ENCODE measurements at regions of chr12 and their contacts with region 1.

Region 1: GRCh38 chr12:53791735-53792326 is 40.1 kb upstream of the CISTR start:
- DNase-seq: no peak
- ATAC-seq: no peak
- H3K4me3 ChIP-seq: no peak overlapping the region
- H3K27ac ChIP-seq: no peak overlapping the region
- H3K4me1 ChIP-seq: no peaks in the 10 kb centered on the region
- H3K27me3 ChIP-seq: peaks cover 0 to 7% (median 4%) of the 10 kb centered on the region in 3 donors
- CTCF ChIP-seq: peak; percentile 14 to 45 (median 29)
- POLR2A ChIP-seq: no peak

Region 2: GRCh38 chr12:53820516-53821306 is 28.9 kb after region 1 on chr12:
- in situ Hi-C with region 1: no loop called
- intact Hi-C with region 1: no loop called
- DNase-seq: no peak
- ATAC-seq: peak in 1 of 2 donors; percentile 55
- H3K4me3 ChIP-seq: no peak overlapping the region
- H3K27ac ChIP-seq: peak overlapping the region in 1 of 4 donors; percentile 28
- H3K4me1 ChIP-seq: no peaks in the 10 kb centered on the region
- H3K27me3 ChIP-seq: peaks cover 8 to 14% (median 14%) of the 10 kb centered on the region in 3 donors
- CTCF ChIP-seq: no peak
- POLR2A ChIP-seq: no peak

Region 3: GRCh38 chr12:53928054-53928835 is 136.4 kb after region 1 on chr12:
- in situ Hi-C with region 1: no loop called
- intact Hi-C with region 1: no loop called
- DNase-seq: no peak
- ATAC-seq: no peak
- H3K4me3 ChIP-seq: no peak overlapping the region
- H3K27ac ChIP-seq: no peak overlapping the region
- H3K4me1 ChIP-seq: no peaks in the 10 kb centered on the region
- H3K27me3 ChIP-seq: peaks cover 70 to 85% (median 76%) of the 10 kb centered on the region in 3 donors
- CTCF ChIP-seq: no peak
- POLR2A ChIP-seq: no peak

Region 4: DNA sequence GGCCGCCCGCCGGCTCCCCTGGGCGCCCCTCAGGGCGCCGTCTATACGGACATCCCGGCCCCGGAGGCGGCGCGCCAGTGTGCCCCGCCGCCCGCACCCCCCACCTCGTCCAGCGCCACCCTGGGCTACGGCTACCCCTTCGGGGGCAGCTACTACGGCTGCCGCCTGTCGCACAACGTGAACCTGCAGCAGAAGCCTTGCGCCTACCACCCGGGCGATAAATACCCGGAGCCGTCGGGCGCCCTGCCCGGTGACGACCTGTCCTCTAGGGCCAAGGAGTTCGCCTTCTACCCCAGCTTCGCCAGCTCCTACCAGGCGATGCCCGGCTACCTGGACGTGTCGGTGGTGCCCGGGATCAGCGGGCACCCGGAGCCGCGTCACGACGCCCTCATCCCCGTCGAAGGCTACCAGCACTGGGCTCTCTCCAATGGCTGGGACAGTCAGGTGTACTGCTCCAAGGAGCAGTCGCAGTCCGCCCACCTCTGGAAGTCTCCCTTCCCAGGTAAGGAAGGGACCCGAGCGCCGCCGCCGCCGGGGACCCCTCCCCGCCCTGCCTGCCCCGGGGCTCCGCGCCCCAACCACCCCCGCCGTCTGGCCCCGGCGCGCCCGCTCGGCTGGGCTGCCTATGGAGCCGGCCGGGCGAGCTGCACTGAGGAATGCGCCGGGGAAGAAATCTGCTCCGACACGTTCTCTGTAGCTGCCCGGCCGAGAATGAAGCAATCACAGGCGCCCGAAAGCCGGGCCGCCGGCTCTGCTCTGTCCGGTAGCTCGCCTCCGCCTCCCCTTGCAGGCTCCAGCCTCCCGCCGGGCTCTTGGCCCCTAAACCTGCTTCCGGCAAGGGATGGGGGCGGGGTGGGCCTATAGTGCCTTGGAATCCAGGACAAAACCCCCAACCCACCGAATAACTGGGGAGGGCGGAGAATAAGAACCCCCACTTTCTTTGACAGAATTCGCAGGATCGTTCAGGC is 147.6 kb after region 1 on chr12:
- in situ Hi-C with region 1: no loop called
- intact Hi-C with region 1: loop called (anchors 10 kb)
- DNase-seq: no peak
- ATAC-seq: no peak
- H3K4me3 ChIP-seq: peak overlapping the region; percentile 31 to 48 (median 45)
- H3K27ac ChIP-seq: no peak overlapping the region
- H3K4me1 ChIP-seq: peaks cover 0 to 8% of the 10 kb centered on the region in 2 donors
- H3K27me3 ChIP-seq: peaks cover 94 to 100% (median 97%) of the 10 kb centered on the region in 3 donors
- CTCF ChIP-seq: no peak
- POLR2A ChIP-seq: no peak

Region 5: GRCh38 chr12:53956251-53956887 is 164.5 kb after region 1 on chr12:
- in situ Hi-C with region 1: no loop called
- intact Hi-C with region 1: no loop called
- DNase-seq: no peak
- ATAC-seq: no peak
- H3K4me3 ChIP-seq: no peak overlapping the region
- H3K27ac ChIP-seq: no peak overlapping the region
- H3K4me1 ChIP-seq: no peaks in the 10 kb centered on the region
- H3K27me3 ChIP-seq: peaks cover 92 to 100% (median 92%) of the 10 kb centered on the region in 3 donors
- CTCF ChIP-seq: no peak
- POLR2A ChIP-seq: no peak

Region 6: GRCh38 chr12:54214553-54215406 is 422.9 kb after region 1 on chr12:
- in situ Hi-C with region 1: loop called in 2 of 4 experiments (anchors 25 kb)
- intact Hi-C with region 1: loop called (anchors 5 kb)
- DNase-seq: peak; percentile 80 to 86
- ATAC-seq: peak; percentile 89 to 94
- H3K4me3 ChIP-seq: peak overlapping the region; percentile 35 to 48 (median 42)
- H3K27ac ChIP-seq: no peak overlapping the region
- H3K4me1 ChIP-seq: peaks cover 15% of the 10 kb centered on the region in 2 donors
- H3K27me3 ChIP-seq: peaks cover 0 to 4% (median 3%) of the 10 kb centered on the region in 3 donors
- CTCF ChIP-seq: peak; percentile 96 to 100 (median 97)
- POLR2A ChIP-seq: no peak